ENCODE measurements at regions of chr11 and their contacts with region 1.

Region 1: GRCh38 chr11:8092587-8093424 is 11.8 kb downstream of the TUB start:
- DNase-seq: peak; percentile 66 to 85
- ATAC-seq: peak; percentile 78 to 94
- H3K4me3 ChIP-seq: no peak overlapping the region
- H3K27ac ChIP-seq: 0 out of 6 replicates have a peak overlapping the region, but pooled peaks of 1 of the 2 experiments have one; percentile 35
- H3K4me1 ChIP-seq: no peaks in the 10 kb centered on the region
- CTCF ChIP-seq: peak; percentile 55
- EP300 ChIP-seq: no peak
- POLR2A ChIP-seq: no peak
- RAD21 ChIP-seq: peak; percentile 25 to 27; a peak in 2 of 5 replicates

Region 2: GRCh38 chr11:8018484-8019313 is 74.1 kb before region 1 on chr11:
- CTCF ChIA-PET with region 1: interaction called, 55 read pairs
- POLR2A ChIA-PET with region 1: no interaction called
- DNase-seq: peak; percentile 32 to 51
- ATAC-seq: peak; percentile 75 to 83
- H3K4me3 ChIP-seq: peak overlapping the region; percentile 61
- H3K27ac ChIP-seq: peak overlapping the region in 1 of 2 experiments; percentile 71; a peak in 3 of 6 replicates
- H3K4me1 ChIP-seq: no peaks in the 10 kb centered on the region; the same call in 2 of the 3 replicates
- CTCF ChIP-seq: no peak
- EP300 ChIP-seq: no peak
- POLR2A ChIP-seq: no peak
- RAD21 ChIP-seq: no peak

Region 3: DNA sequence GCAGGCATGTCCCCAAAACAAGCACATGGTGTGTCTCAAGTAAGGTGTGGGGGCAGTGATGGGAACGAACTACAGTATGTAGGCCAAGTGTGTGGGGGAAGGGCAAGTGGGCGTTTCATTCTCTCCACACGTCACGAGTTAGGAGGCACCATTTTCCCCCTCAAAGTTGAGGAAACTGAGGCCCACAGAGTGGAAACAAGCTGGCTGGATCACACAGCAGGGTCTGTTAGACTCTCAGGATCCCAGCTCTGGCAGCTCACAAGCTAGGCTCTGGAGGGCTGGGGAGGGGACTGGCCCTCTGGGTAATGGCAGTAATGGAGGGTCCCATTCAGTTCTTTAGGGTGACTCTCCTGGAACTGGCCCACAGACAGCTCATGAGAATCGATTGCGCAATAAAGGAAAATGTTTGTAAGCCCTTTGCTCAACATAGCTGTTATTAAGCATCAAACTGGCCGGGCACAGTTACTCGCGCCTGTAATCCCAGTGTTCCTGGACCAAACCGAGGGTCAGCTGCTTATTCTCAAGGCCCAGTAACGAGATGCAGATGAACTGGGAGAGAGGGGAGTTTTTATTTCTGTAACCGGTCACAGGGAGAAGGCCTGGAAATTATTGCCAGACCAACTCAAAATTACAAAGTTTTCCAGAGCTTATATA is 35.9 kb before region 1 on chr11:
- CTCF ChIA-PET with region 1: interaction called, 13 read pairs
- POLR2A ChIA-PET with region 1: no interaction called
- DNase-seq: no peak
- ATAC-seq: no peak
- H3K4me3 ChIP-seq: no peak overlapping the region
- H3K27ac ChIP-seq: no peak overlapping the region
- H3K4me1 ChIP-seq: no peaks in the 10 kb centered on the region
- CTCF ChIP-seq: no peak
- EP300 ChIP-seq: no peak
- POLR2A ChIP-seq: no peak
- RAD21 ChIP-seq: no peak

Region 4: GRCh38 chr11:8070417-8071115 is 22.2 kb before region 1 on chr11:
- CTCF ChIA-PET with region 1: interaction called, 17 read pairs
- POLR2A ChIA-PET with region 1: no interaction called
- DNase-seq: peak; percentile 34 to 84
- ATAC-seq: peak; percentile 65 to 82
- H3K4me3 ChIP-seq: no peak overlapping the region
- H3K27ac ChIP-seq: no peak overlapping the region
- H3K4me1 ChIP-seq: peaks cover 18% of the 10 kb centered on the region
- CTCF ChIP-seq: peak; percentile 28
- EP300 ChIP-seq: no peak
- POLR2A ChIP-seq: no peak
- RAD21 ChIP-seq: peak; percentile 44 to 52

Region 5: GRCh38 chr11:8080674-8081590 is 11.9 kb before region 1 on chr11 and contains the start of gene TUB:
- CTCF ChIA-PET with region 1: interaction called, 143 read pairs
- POLR2A ChIA-PET with region 1: no interaction called
- DNase-seq: peak; percentile 19 to 65
- ATAC-seq: peak; percentile 64 to 78
- H3K4me3 ChIP-seq: peak within 1 kb of the TSS; percentile 80
- H3K27ac ChIP-seq: peak within 1 kb of the TSS; percentile 74 to 88
- H3K4me1 ChIP-seq: peaks cover 6% of the 10 kb centered on the region; the same call in 1 of the 3 replicates
- CTCF ChIP-seq: no peak
- EP300 ChIP-seq: no peak
- POLR2A ChIP-seq: peak; percentile 41
- RAD21 ChIP-seq: no peak
- polyA plus RNA-seq, gene TUB: 11.3 and 11.7 TPM in 2 replicates

Region 6: GRCh38 chr11:8111636-8112035 is 18.8 kb after region 1 on chr11:
- CTCF ChIA-PET with region 1: interaction called, 13 read pairs
- POLR2A ChIA-PET with region 1: no interaction called
- DNase-seq: no peak
- ATAC-seq: no peak
- H3K4me3 ChIP-seq: no peak overlapping the region
- H3K27ac ChIP-seq: no peak overlapping the region
- H3K4me1 ChIP-seq: no peaks in the 10 kb centered on the region
- CTCF ChIP-seq: no peak
- EP300 ChIP-seq: no peak
- POLR2A ChIP-seq: no peak
- RAD21 ChIP-seq: no peak

Region 7: DNA sequence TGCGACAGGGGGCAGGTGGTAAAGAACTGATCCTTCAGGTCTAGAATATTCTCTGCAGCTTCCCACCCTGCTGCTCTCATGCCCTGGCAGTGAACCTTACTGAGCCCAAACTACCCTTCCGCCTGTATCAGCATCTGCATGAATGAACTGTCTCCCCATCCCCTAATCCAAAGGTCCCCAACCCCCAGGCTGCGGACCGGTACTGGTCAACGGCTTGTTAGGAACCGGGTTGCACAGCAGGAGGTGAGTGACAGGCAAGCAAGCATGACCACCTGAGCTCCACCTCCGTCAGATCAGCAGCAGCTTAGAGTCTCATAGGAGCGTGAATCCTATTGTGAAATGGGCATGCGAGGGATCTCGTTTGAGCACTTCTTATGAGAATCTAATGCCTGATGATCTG is 229.1 kb after region 1 on chr11:
- CTCF ChIA-PET with region 1: no interaction called
- POLR2A ChIA-PET with region 1: no interaction called
- DNase-seq: no peak
- ATAC-seq: no peak
- H3K4me3 ChIP-seq: no peak overlapping the region
- H3K27ac ChIP-seq: no peak overlapping the region
- H3K4me1 ChIP-seq: no peaks in the 10 kb centered on the region
- CTCF ChIP-seq: no peak
- EP300 ChIP-seq: no peak
- POLR2A ChIP-seq: no peak
- RAD21 ChIP-seq: no peak